AG04449 (cell line): ENCODE measurements at regions of chr5 and their contacts with region 1.

Region 1: DNA sequence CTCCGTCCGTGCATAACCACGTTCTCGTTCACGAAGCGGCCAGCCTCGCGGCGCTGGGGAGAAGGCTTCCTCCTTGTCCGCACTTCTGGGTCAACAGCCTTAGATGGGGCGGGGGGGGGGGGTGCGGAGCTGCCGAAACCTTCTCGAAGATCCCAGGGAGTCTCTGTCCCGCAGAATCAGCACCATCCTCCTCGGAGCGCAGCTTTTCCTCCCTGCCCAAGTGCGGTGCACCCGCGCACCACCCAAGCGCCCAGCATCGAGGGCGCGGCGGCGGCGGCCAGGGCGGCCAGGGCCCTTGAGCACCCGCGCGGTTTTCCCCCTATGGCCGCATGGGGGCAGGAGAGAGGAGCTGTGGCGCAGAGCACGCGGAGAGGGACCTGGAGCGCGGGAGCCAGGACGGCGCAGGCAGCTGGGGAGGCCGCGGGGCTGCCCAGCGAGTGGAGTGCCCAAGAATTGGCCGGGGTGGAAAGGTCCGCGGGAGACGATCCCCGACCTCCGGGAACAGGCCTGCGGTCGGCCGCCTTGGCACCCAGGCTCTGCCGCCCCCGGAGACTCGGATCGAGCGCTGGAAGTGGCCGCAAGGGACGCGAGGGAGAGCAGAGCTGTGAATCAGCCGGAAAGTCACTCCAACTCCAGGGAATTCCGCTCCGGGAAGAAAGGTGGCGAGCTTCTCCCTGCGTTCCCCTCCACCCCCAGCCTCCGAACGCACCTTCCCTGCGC is 43.1 kb downstream of the TMEM174 start:
- DNase-seq: no peak
- H3K4me3 ChIP-seq: peak overlapping the region; percentile 59
- CTCF ChIP-seq: peak; percentile 92

Region 2: DNA sequence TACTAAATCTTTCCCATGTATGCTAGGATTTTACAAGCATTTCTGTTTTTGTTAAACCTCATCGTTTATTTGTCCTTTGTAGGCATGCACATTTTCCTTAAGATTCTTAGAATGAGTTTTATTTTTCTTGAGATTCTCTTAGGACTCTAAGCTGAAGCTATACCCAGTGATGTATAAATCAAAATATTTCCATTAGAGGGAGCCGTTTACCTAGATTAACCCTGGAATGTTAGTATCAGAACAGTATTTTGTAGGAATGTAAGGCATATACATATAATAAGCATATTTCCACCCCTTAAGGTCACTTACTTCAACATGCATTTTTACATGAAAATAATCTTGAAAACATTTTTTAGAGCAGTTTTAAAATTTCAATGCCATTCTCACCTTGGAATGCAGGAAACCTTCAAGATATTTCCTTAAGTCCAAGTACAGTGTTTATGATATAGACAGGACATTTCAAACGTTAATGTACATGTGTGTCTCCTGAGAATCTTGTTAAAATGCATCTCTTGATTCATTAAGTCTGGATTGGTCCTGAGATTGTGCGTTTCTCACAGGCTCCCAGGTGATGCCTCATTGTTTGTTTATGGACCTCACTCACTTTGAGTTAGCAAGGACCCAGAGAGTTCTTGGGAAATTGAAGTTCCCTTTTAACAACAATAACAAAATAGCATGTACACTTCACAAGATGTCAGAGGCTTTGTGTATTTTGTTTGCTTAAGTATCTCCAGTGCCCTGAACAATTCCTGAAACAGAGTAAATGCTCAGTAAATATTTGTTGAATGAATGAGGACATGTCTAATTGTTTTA is 295.2 kb before region 1 on chr5:
- CTCF ChIA-PET with region 1: interaction called, 27 read pairs
- POLR2A ChIA-PET with region 1: no interaction called
- DNase-seq: no peak
- H3K4me3 ChIP-seq: no peak overlapping the region
- CTCF ChIP-seq: peak; percentile 28

Region 3: GRCh38 chr5:73100109-73100508 is 115.9 kb before region 1 on chr5:
- CTCF ChIA-PET with region 1: interaction called, 25 read pairs
- POLR2A ChIA-PET with region 1: interaction called, 4 read pairs
- DNase-seq: no peak
- H3K4me3 ChIP-seq: no peak overlapping the region
- CTCF ChIP-seq: no peak

Region 4: DNA sequence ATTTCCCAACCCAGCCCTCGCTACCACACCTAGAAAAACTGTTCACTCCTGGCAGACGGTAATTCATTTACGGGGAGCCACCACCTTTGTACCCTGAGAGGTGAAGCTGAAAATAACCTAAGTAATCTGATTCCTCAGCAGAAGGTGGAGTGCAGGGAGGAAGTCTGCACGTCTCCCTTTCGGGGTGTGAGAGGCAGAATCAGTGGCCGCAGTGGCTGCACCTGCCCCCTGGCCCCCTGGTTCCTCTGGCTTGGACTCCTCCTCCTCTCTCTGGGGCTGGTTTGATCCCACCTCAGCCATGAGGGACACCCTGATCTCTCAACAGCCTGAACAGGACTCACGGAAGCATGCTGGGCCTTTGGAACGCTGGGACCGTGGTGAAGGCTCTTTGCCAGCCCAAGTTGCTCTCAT is 32.6 kb before region 1 on chr5:
- CTCF ChIA-PET with region 1: interaction called, 18 read pairs
- POLR2A ChIA-PET with region 1: no interaction called
- DNase-seq: no peak
- H3K4me3 ChIP-seq: no peak overlapping the region
- CTCF ChIP-seq: no peak

Region 5: GRCh38 chr5:73250645-73251044 is 34.6 kb after region 1 on chr5:
- CTCF ChIA-PET with region 1: interaction called, 17 read pairs
- POLR2A ChIA-PET with region 1: interaction called, 3 read pairs
- DNase-seq: no peak
- H3K4me3 ChIP-seq: no peak overlapping the region
- CTCF ChIP-seq: no peak

Region 6: DNA sequence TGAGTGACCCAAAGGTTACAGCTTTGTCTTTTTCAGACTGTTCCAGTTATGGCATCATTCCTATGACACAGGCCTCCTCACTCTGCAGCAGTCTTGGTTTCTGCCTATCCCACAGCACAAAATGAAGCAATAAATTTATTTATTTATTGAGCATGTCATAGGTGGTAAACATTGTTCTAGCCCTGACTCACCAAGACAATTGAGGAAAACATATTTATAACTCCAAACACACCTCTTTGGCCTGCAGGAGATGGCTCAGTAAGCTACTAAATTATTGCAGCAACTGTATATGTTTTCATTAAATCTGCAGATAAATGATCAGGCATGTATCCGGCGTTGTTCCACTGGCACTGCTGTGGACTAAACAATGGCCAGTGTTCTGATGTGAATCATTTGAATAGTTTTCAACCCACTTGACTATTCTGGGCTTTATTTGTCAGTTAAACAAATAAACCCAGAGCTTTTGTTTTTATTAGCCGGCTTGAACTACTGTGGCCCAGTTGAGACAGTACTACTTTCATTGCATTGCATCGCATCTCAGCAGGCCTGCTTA is 149.3 kb after region 1 on chr5:
- CTCF ChIA-PET with region 1: interaction called, 12 read pairs
- POLR2A ChIA-PET with region 1: no interaction called
- DNase-seq: no peak
- H3K4me3 ChIP-seq: no peak overlapping the region
- CTCF ChIP-seq: no peak

Region 7: GRCh38 chr5:73498057-73499008 is 282.3 kb after region 1 on chr5 and contains the start of gene BTF3:
- CTCF ChIA-PET with region 1: interaction called, 34 read pairs
- POLR2A ChIA-PET with region 1: no interaction called
- DNase-seq: peak; percentile 80
- H3K4me3 ChIP-seq: peak within 1 kb of the TSS; percentile 87
- CTCF ChIP-seq: no peak